ENCODE measurements at regions of chr1 and their contacts with region 1.

Region 1: GRCh38 chr1:149962123-149962548 is 25.5 kb upstream of the MTMR11 start:
- DNase-seq: no peak
- ATAC-seq: peak; percentile 60
- H3K4me3 Mint-ChIP-seq: no peak overlapping the region
- H3K27ac Mint-ChIP-seq: no peak overlapping the region
- H3K4me1 Mint-ChIP-seq: peaks cover 4% of the 10 kb centered on the region
- H3K27me3 Mint-ChIP-seq: peaks cover 2% of the 10 kb centered on the region
- CTCF ChIP-seq: peak; percentile 99

Region 2: DNA sequence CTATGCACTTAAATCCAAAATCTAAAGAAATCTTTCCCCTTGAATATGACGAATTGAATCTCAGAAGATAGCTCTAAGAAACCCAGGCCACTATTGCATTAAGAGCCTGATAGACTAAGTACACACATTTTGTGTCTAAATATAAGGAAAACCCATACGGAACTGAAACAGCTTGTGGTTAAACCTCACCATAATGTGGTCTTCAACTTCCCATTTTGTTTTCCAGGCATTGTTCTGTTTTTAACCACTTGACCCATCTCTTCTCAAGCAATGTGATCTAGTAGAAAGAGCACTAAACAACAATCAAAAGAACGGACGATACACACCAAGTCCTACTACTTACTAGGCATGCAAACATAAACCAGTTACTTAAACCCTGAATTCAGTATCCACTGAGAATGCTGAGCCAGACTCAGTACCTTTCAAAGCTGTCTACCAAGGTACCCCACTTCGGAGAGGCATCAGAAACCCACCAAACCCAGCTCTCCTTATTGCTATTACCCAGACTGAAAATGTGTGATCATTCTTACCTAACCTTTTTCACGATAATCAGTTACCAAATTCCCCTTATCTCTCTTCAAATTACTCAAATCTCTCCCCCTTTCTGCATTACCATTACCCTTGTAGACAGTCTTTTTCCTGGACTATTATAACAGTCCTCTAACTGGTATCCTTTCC is 35.6 kb after region 1 on chr1:
- CTCF ChIA-PET with region 1: interaction called, 10 read pairs
- POLR2A ChIA-PET with region 1: no interaction called
- intact Hi-C with region 1: no loop called
- DNase-seq: no peak
- ATAC-seq: peak; percentile 86
- H3K4me3 Mint-ChIP-seq: peak overlapping the region; percentile 48
- H3K27ac Mint-ChIP-seq: peak overlapping the region; percentile 47
- H3K4me1 Mint-ChIP-seq: peaks cover 39% of the 10 kb centered on the region
- H3K27me3 Mint-ChIP-seq: peaks cover 38% of the 10 kb centered on the region
- CTCF ChIP-seq: no peak

Region 3: GRCh38 chr1:150053926-150054325 is 91.8 kb after region 1 on chr1:
- CTCF ChIA-PET with region 1: interaction called, 33 read pairs
- POLR2A ChIA-PET with region 1: interaction called, 11 read pairs
- intact Hi-C with region 1: loop called (anchors 1 kb)
- DNase-seq: no peak
- ATAC-seq: no peak
- H3K4me3 Mint-ChIP-seq: no peak overlapping the region
- H3K27ac Mint-ChIP-seq: no peak overlapping the region
- H3K4me1 Mint-ChIP-seq: peaks cover 16% of the 10 kb centered on the region
- H3K27me3 Mint-ChIP-seq: no peaks in the 10 kb centered on the region
- CTCF ChIP-seq: no peak

Region 4: DNA sequence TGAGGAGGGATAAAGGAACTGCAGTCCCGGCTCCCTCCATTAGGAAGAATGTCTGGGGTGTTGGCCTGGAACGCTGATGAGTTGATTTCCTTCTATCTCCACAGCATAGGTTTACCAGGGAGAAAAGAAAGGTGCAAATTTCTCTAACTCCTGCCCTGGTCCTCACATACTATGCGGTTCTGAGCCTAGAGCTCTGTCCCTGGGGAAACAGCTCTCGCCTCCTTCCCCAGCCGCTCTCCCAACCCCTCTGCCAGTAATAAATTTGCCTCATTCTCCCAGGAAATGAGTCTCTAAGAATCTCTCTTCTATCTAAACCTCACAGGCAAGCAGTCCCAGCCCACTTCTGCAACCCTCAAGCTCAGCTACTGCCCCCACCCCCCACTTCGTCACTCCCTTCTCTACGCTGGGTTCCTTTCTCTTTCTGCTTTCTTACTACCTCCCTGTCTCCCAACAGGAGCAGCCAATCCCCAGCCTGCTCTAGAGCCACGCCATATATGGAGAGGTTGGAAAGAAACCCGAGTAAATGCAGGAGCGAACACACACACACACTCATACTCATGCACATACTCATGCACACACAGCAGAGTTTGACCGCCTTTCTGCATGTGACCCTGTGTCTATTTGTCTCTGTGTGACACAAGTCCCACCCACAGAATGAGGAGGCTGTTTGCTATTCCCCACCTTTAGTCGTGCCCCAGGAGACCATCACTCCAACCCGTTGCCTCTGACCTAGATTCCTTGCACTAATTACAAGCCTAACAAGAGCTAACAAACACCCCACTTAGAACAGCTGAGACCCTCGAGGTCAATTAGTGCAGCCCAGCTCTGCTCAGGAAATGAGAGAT is 200.9 kb after region 1 on chr1:
- CTCF ChIA-PET with region 1: interaction called, 26 read pairs
- POLR2A ChIA-PET with region 1: no interaction called
- intact Hi-C with region 1: loop called (anchors 1 kb)
- DNase-seq: peak; percentile 34
- ATAC-seq: peak; percentile 28
- H3K4me3 Mint-ChIP-seq: peak overlapping the region; percentile 81
- H3K27ac Mint-ChIP-seq: peak overlapping the region; percentile 98
- H3K4me1 Mint-ChIP-seq: peaks cover 86% of the 10 kb centered on the region
- H3K27me3 Mint-ChIP-seq: no peaks in the 10 kb centered on the region
- CTCF ChIP-seq: no peak

Measured in activated B cell treated with CpG ODN at 0.5 μM for 24 hours (primary cell).